ENCODE measurements at regions of chr2 and their contacts with region 1.

Region 1: GRCh38 chr2:108215794-108216211 is 24.0 kb upstream of the SULT1C3 start:
- DNase-seq: peak; percentile 54
- H3K4me3 Mint-ChIP-seq: no peak overlapping the region
- H3K27ac Mint-ChIP-seq: no peak overlapping the region
- H3K4me1 Mint-ChIP-seq: no peaks in the 10 kb centered on the region
- H3K27me3 Mint-ChIP-seq: no peaks in the 10 kb centered on the region
- CTCF ChIP-seq: no peak

Region 2: GRCh38 chr2:108228006-108228405 is 12.2 kb after region 1 on chr2:
- CTCF ChIA-PET with region 1: no interaction called
- intact Hi-C with region 1: no loop called
- DNase-seq: no peak
- H3K4me3 Mint-ChIP-seq: no peak overlapping the region
- H3K27ac Mint-ChIP-seq: no peak overlapping the region
- H3K4me1 Mint-ChIP-seq: no peaks in the 10 kb centered on the region
- H3K27me3 Mint-ChIP-seq: peaks cover 7% of the 10 kb centered on the region
- CTCF ChIP-seq: no peak

Region 3: GRCh38 chr2:108345951-108346350 is 130.1 kb after region 1 on chr2:
- CTCF ChIA-PET with region 1: interaction called, 3 read pairs
- intact Hi-C with region 1: loop called (anchors 2 kb)
- DNase-seq: peak; percentile 24
- H3K4me3 Mint-ChIP-seq: no peak overlapping the region
- H3K27ac Mint-ChIP-seq: no peak overlapping the region
- H3K4me1 Mint-ChIP-seq: peaks cover 9% of the 10 kb centered on the region
- H3K27me3 Mint-ChIP-seq: no peaks in the 10 kb centered on the region
- CTCF ChIP-seq: no peak